CD4-positive, alpha-beta T cell (primary cell): ENCODE measurements at regions of chr5 and their contacts with region 1.

Region 1: DNA sequence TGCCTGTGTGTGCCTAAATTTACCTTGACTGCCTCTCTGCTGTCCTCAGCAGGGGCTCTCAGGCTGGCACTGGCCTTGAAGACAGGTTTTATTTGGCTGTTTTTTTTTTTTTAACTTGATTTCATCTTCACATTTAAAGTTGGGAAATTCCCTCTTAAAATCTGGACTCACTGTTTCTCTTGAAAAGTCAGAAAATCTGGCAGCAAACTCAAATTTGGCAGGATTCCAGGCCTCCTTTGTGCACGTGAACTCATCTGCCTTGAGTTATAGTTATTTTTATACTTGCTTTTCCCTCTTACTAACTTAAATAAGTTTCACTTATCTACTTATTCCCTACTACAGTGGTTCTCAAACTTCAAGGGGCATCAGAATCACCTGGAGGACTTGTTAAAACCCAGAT is 118.4 kb upstream of the MAP3K1 start:
- DNase-seq: peak in 6 of 14 experiments; percentile 20 to 75 (median 44)
- ATAC-seq: no peak
- H3K4me3 ChIP-seq: no peak overlapping the region
- H3K4me3 Mint-ChIP-seq: peak overlapping the region; percentile 26
- H3K27ac ChIP-seq: no peak overlapping the region
- H3K27ac Mint-ChIP-seq: peak overlapping the region; percentile 78
- H3K4me1 ChIP-seq: peaks cover 74% of the 10 kb centered on the region
- H3K4me1 Mint-ChIP-seq: peaks cover 97% of the 10 kb centered on the region
- H3K27me3 ChIP-seq: no peaks in the 10 kb centered on the region
- H3K27me3 Mint-ChIP-seq: no peaks in the 10 kb centered on the region
- CTCF ChIP-seq: no peak

Region 2: DNA sequence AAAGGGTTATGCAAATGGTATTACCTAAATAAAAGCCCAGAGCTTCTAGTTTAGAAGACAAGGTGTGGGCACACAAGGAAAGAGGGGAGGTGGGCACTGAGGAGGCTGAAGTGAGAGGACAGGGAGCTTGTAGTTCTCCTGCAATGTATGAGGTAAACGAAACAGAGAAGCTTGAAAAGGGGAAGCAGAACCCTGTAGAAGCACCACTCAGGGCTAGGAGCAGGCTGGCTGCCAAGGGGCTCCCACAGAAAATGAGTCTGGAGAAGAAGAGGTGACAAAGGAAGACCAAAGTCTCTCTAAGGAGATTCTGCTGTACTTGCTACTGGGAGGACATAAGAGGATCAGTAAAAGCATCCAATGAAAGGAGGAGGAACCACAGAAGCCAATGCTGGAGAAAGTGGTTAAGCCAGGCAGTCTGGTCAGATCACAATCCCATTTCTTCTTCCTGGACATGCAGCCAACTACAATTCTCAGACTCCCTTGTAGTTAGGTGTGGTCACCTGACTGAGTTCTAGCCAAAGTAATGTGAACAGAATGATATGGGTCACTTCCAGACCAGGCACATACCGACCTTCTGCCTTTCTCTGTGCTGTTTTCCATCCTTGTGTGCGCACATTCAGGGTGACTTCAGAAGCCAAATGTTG is 56.0 kb before region 1 on chr5:
- CTCF ChIA-PET with region 1: no interaction called
- POLR2A ChIA-PET with region 1: interaction called, 5 read pairs
- intact Hi-C with region 1: loop called in 1 of 2 experiments (anchors 10 kb)
- DNase-seq: peak in 2 of 14 experiments; percentile 26 to 30
- ATAC-seq: no peak
- H3K4me3 ChIP-seq: no peak overlapping the region
- H3K4me3 Mint-ChIP-seq: no peak overlapping the region
- H3K27ac ChIP-seq: no peak overlapping the region
- H3K27ac Mint-ChIP-seq: peak overlapping the region; percentile 97
- H3K4me1 ChIP-seq: peaks cover 6% of the 10 kb centered on the region
- H3K4me1 Mint-ChIP-seq: peaks cover 52% of the 10 kb centered on the region
- H3K27me3 ChIP-seq: no peaks in the 10 kb centered on the region
- H3K27me3 Mint-ChIP-seq: no peaks in the 10 kb centered on the region
- CTCF ChIP-seq: no peak

Region 3: DNA sequence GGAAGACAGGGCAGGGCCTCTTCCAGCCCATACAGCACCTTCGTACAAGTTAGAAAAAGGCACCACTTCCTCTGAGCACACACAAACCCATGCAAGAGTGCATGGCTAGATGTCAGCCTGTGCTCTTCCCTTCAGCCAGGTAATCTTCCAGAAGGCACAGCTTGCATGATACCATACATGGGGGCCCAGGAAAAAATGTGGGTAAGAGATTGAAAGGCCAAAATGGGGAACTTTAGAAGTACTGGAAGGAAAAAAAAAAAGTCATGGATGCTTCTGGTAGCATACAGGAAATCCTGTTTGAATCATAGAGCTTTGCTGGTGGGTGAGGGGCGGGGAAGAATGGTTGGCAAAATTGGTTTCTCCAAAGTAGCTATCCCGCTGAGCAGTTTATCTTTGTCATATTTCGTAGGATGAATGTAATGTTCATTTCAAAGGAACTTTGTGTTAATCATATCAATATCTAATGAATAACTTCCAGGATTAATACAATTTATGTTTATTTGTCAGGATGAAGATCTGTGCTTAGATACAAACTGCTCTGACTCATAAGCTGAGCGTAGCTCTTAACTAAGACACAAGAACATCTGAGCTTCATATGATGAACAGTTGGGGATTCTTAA is 40.2 kb after region 1 on chr5:
- CTCF ChIA-PET with region 1: no interaction called
- POLR2A ChIA-PET with region 1: interaction called, 15 read pairs
- intact Hi-C with region 1: no loop called
- DNase-seq: peak in 5 of 14 experiments; percentile 3 to 41 (median 35)
- ATAC-seq: peak; percentile 45
- H3K4me3 ChIP-seq: no peak overlapping the region
- H3K4me3 Mint-ChIP-seq: peak overlapping the region; percentile 78
- H3K27ac ChIP-seq: peak overlapping the region; percentile 55 to 76
- H3K27ac Mint-ChIP-seq: peak overlapping the region; percentile 86
- H3K4me1 ChIP-seq: peaks cover 48% of the 10 kb centered on the region
- H3K4me1 Mint-ChIP-seq: peaks cover 59% of the 10 kb centered on the region
- H3K27me3 ChIP-seq: no peaks in the 10 kb centered on the region
- H3K27me3 Mint-ChIP-seq: no peaks in the 10 kb centered on the region
- CTCF ChIP-seq: no peak

Region 4: DNA sequence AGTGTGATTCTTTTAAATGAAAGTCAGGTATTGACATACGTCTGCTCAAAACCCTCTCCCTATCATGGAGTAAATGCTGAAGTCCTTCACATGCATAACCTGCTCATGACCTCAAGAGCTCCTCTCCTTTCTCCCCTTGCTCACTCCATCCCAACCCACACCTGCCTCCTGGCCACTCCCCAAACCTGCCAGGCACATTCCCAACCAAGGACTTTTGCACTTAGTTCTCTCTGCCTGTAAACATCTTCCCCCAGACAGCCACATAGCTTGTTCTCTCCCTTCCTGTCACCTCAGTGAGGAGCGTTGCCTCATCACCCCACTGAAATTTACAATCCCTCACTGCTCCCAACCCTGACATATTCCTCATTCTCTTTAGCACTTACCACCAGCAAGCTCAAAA is 221.2 kb after region 1 on chr5:
- CTCF ChIA-PET with region 1: no interaction called
- POLR2A ChIA-PET with region 1: no interaction called
- intact Hi-C with region 1: no loop called
- DNase-seq: no peak
- ATAC-seq: no peak
- H3K4me3 ChIP-seq: no peak overlapping the region
- H3K4me3 Mint-ChIP-seq: no peak overlapping the region
- H3K27ac ChIP-seq: no peak overlapping the region
- H3K27ac Mint-ChIP-seq: no peak overlapping the region
- H3K4me1 ChIP-seq: no peaks in the 10 kb centered on the region
- H3K4me1 Mint-ChIP-seq: no peaks in the 10 kb centered on the region
- H3K27me3 ChIP-seq: no peaks in the 10 kb centered on the region
- H3K27me3 Mint-ChIP-seq: no peaks in the 10 kb centered on the region
- CTCF ChIP-seq: no peak